Lower lobe of right lung (tissue), 2 donors: ENCODE measurements at regions of chr5 and their contacts with region 1.

Region 1: DNA sequence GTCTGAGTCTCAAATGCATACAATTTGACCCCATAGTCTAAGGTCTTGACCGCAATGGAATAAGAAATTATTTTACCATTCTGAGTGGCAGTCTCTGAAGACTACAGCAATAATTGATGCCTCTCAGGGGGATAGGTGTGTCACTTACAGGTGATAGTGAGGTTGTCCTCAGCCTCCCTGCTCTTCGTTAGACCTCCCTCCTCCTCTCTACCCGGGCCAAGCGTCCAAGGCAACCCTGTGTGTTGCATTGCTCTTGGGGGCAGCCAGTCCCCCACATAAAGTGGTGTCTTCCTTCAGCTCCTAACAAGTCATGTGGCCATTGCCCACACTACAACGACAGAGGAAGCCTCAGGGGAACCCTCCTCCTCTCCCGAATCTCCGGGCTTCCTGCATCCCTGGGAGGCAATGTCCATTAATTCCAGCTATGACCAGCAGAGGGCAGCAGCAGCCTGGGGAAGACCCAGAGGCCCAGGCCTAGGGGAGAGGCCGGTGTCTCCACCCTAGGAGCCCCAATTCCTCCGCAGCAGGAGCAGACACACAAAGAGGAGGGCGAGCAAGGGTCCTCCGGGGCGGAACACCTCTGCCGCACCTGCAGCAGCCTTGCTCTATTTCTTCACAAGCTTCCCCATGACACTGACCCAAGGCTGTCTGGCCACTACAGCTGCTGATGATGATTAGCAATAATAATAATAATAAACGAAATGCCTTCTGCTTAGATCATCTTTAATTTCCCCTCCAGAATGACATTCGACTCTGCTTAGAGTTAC is 134.8 kb downstream of the KCNIP1 start:
- DNase-seq: no peak
- ATAC-seq: peak; percentile 72 to 77
- H3K4me3 ChIP-seq: no peak overlapping the region
- H3K27ac ChIP-seq: no peak overlapping the region
- H3K4me1 ChIP-seq: peaks cover 8% of the 10 kb centered on the region
- H3K27me3 ChIP-seq: peaks cover 13% of the 10 kb centered on the region
- CTCF ChIP-seq: peak; percentile 92

Region 2: DNA sequence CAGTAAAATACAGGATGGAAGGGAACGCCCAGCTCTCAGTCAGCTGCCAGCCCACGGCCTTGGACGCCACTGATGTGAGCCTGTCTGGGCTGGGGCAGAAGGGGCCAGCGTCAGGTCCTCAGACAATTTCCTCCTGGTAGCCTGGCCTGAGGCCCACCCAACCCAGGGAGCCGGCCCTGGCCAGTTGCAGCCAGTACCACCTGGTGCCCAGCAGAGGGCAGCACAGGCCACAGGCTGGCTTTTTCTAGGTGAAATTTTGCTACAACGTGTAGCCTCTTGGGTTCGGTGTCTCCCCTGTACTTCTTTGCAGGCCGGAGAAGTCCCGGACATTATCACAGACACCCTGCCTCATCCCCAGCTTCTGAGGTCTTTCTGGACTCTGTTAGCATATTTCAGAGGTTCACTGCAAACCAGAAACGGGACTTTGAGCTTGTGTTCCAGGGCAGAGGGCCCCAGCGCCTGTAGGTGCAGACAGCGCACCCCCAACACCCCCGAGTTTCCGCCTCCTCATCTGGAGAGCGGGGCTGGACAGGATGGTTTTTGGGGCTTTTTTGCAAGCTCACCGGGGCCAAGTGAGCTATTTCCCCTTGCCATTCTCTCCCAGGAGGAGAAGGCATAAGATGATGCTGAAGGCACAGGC is 203.6 kb before region 1 on chr5:
- intact Hi-C with region 1: loop called (anchors 10 kb)
- DNase-seq: peak; percentile 73
- ATAC-seq: peak; percentile 88 to 89
- H3K4me3 ChIP-seq: no peak overlapping the region
- H3K27ac ChIP-seq: no peak overlapping the region
- H3K4me1 ChIP-seq: no peaks in the 10 kb centered on the region
- H3K27me3 ChIP-seq: no peaks in the 10 kb centered on the region
- CTCF ChIP-seq: peak; percentile 99